Left lung (tissue), 14 donors: ENCODE measurements at regions of chr3 and their contacts with region 1.

Region 1: DNA sequence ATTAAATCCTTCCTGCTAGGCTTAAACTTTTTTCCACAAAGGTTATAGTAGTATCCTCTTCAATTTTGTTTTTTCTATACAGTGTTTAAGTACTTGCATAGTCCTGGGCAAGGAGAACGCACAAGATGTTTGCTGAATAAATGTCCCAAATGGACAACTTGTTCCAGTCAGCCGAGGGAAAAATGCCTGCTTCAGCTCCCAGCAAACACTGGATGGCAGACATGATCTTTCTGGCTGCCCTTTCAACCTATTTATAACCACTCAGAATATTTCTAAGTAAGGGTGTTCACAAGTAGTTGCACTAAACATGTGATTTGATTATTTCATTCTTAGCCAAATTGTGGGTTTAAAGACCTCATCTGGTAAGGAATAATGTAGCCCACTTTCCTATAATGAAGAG is 29.8 kb downstream of the GNB4 start:
- DNase-seq: peak in 2 of 4 donors; percentile 28 to 60
- ATAC-seq: peak; percentile 76
- H3K4me3 ChIP-seq: no peak overlapping the region
- H3K27ac ChIP-seq: no peak overlapping the region
- H3K4me1 ChIP-seq: peaks cover 0 to 6% of the 10 kb centered on the region in 2 donors
- H3K27me3 ChIP-seq: no peaks in the 10 kb centered on the region
- CTCF ChIP-seq: peak in 1 of 2 donors; percentile 36

Region 2: GRCh38 chr3:179558742-179559364 is 137.4 kb after region 1 on chr3:
- intact Hi-C with region 1: loop called in 1 of 2 experiments (anchors 10 kb)
- DNase-seq: peak in 3 of 4 donors; percentile 44 to 78 (median 60)
- ATAC-seq: no peak
- H3K4me3 ChIP-seq: no peak overlapping the region
- H3K27ac ChIP-seq: no peak overlapping the region
- H3K4me1 ChIP-seq: peaks cover 3 to 11% of the 10 kb centered on the region in 2 donors
- H3K27me3 ChIP-seq: no peaks in the 10 kb centered on the region
- CTCF ChIP-seq: peak; percentile 63 to 84